Naive thymus-derived CD4-positive, alpha-beta T cell (primary cell): ENCODE measurements at regions of chr11 and their contacts with region 1.

Region 1: GRCh38 chr11:65859200-65859811 is 927 bp upstream of the MUS81 start:
- DNase-seq: peak; percentile 84 to 97 (median 90)
- ATAC-seq: peak; percentile 71
- H3K4me3 ChIP-seq: peak overlapping the region; percentile 65
- H3K4me3 Mint-ChIP-seq: peak overlapping the region; percentile 92 to 100 (median 97)
- H3K27ac ChIP-seq: peak overlapping the region; percentile 88
- H3K27ac Mint-ChIP-seq: peak overlapping the region; percentile 88 to 99 (median 97)
- H3K4me1 ChIP-seq: peaks cover 39 to 41% of the 10 kb centered on the region in 2 donors
- H3K4me1 Mint-ChIP-seq: peaks cover 35 to 63% (median 50%) of the 10 kb centered on the region in 7 donors
- H3K27me3 ChIP-seq: no peaks in the 10 kb centered on the region
- H3K27me3 Mint-ChIP-seq: no peaks in the 10 kb centered on the region

Region 2: DNA sequence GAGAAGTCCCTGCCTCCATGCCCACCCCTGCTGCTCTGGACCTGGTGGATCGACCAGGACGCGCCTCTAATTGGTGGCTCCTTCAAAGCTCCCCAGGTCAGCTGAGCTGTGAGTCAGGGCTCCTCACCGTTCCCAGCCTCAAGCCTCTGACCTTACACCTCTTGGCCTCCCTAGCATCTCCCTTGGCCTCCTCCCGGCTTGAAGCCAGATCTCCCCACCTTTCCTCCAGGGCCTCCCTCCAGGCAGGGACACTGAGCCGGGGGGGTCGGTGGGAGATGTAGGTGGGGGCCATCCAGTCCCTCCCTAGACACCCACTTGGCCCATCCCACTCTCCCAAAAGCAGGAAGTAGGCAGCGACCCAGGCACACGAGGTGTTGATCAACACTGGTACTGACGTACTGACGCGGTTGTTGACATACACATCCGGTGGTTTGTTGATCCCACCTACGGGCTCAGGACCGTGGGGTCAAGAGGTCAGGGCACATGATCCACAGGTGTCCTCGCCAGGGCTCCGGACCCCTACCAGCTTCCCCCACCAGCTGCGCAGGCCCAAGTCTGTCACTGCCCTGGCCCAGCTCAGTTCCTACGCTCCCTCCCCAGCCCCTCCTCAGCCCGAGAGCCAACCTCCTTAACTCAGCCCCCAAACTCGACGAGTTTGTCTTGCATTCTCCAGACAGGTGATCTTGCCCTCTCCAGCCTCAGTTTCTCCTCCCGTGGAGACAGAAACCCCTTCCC is 943.1 kb before region 1 on chr11:
- CTCF ChIA-PET with region 1: no interaction called
- POLR2A ChIA-PET with region 1: no interaction called
- intact Hi-C with region 1: no loop called
- DNase-seq: peak in 6 of 9 donors; percentile 11 to 54 (median 26)
- ATAC-seq: peak; percentile 15
- H3K4me3 ChIP-seq: peak overlapping the region; percentile 92
- H3K4me3 Mint-ChIP-seq: peak overlapping the region; percentile 88 to 98 (median 91)
- H3K27ac ChIP-seq: peak overlapping the region; percentile 83
- H3K27ac Mint-ChIP-seq: peak overlapping the region; percentile 81 to 99 (median 91)
- H3K4me1 ChIP-seq: peaks cover 18 to 22% of the 10 kb centered on the region in 2 donors
- H3K4me1 Mint-ChIP-seq: peaks cover 14 to 33% (median 25%) of the 10 kb centered on the region in 7 donors
- H3K27me3 ChIP-seq: no peaks in the 10 kb centered on the region
- H3K27me3 Mint-ChIP-seq: no peaks in the 10 kb centered on the region

Region 3: GRCh38 chr11:65416060-65416824 is 443.1 kb before region 1 on chr11:
- CTCF ChIA-PET with region 1: no interaction called
- POLR2A ChIA-PET with region 1: no interaction called
- intact Hi-C with region 1: no loop called
- DNase-seq: peak; percentile 82 to 94 (median 88)
- ATAC-seq: peak; percentile 72
- H3K4me3 ChIP-seq: peak overlapping the region; percentile 82
- H3K4me3 Mint-ChIP-seq: peak overlapping the region; percentile 92 to 100 (median 97)
- H3K27ac ChIP-seq: peak overlapping the region; percentile 98
- H3K27ac Mint-ChIP-seq: peak overlapping the region; percentile 98 to 100 (median 99)
- H3K4me1 ChIP-seq: peaks cover 36 to 46% of the 10 kb centered on the region in 2 donors
- H3K4me1 Mint-ChIP-seq: peaks cover 36 to 49% (median 44%) of the 10 kb centered on the region in 7 donors
- H3K27me3 ChIP-seq: no peaks in the 10 kb centered on the region
- H3K27me3 Mint-ChIP-seq: no peaks in the 10 kb centered on the region

Region 4: DNA sequence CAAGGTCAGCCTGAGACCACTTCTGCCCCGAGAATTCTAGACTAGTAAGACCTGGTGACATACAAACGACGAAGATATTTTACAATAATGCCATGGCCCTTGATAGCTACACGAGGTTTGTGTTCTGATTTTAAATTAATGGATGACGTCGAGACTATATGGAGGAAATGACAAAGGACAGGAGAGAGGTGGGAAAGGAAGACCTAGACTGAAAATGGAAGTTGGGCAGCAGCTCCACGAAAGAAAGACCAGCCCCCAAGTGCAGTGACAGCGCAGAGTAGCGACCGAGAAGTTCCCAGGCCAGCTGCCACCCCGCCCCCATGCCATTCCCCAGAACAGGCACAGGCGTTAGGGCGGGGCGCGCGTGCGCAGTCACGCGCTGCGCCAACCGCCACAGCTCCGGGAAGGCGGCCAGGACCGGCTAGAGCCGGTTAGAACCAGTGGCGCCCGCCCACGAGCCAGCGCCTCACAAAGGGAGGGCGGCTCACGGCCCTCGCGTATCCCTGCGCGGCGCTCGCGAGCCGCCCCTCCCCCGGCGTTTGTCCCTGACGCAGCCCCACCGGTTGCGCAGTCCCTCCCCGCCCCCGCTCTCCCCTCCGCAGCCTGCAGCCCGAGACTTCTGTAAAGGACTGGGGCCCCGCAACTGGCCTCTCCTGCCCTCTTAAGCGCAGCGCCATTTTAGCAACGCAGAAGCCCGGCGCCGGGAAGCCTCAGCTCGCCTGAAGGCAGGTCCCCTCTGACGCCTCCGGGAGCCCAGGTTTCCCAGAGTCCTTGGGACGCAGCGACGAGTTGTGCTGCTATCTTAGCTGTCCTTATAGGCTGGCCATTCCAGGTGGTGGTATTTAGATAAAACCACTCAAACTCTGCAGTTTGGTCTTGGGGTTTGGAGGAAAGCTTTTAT is 361.9 kb before region 1 on chr11:
- CTCF ChIA-PET with region 1: no interaction called
- POLR2A ChIA-PET with region 1: interaction called, 18 read pairs
- intact Hi-C with region 1: no loop called
- DNase-seq: peak; percentile 95 to 99 (median 98)
- ATAC-seq: peak; percentile 89
- H3K4me3 ChIP-seq: peak overlapping the region; percentile 99
- H3K4me3 Mint-ChIP-seq: no peak overlapping the region
- H3K27ac ChIP-seq: peak overlapping the region; percentile 99
- H3K27ac Mint-ChIP-seq: no peak overlapping the region
- H3K4me1 ChIP-seq: peaks cover 11 to 12% of the 10 kb centered on the region in 2 donors
- H3K4me1 Mint-ChIP-seq: peaks cover 13 to 43% (median 24%) of the 10 kb centered on the region in 7 donors
- H3K27me3 ChIP-seq: no peaks in the 10 kb centered on the region
- H3K27me3 Mint-ChIP-seq: peaks cover 0 to 6% (median 0%) of the 10 kb centered on the region in 5 donors

Region 5: GRCh38 chr11:65662799-65663638 is 196.3 kb before region 1 on chr11 and contains the start of gene RELA:
- CTCF ChIA-PET with region 1: no interaction called
- POLR2A ChIA-PET with region 1: interaction called, 10 read pairs
- intact Hi-C with region 1: loop called (anchors 2 kb)
- DNase-seq: peak; percentile 84 to 92 (median 89)
- ATAC-seq: peak; percentile 92
- H3K4me3 ChIP-seq: peak within 1 kb of the TSS; percentile 85
- H3K4me3 Mint-ChIP-seq: peak within 1 kb of the TSS; percentile 86 to 93 (median 90)
- H3K27ac ChIP-seq: peak within 1 kb of the TSS; percentile 99
- H3K27ac Mint-ChIP-seq: peak within 1 kb of the TSS; percentile 86 to 95 (median 92)
- H3K4me1 ChIP-seq: peaks cover 20 to 33% of the 10 kb centered on the region in 2 donors
- H3K4me1 Mint-ChIP-seq: peaks cover 10 to 43% (median 31%) of the 10 kb centered on the region in 7 donors
- H3K27me3 ChIP-seq: no peaks in the 10 kb centered on the region
- H3K27me3 Mint-ChIP-seq: no peaks in the 10 kb centered on the region
- total RNA-seq, gene RELA: 106 to 303 (median 165) TPM

Region 6: GRCh38 chr11:65833297-65834030 is 25.8 kb before region 1 on chr11 and contains the start of gene SNX32:
- CTCF ChIA-PET with region 1: interaction called, 3 read pairs
- POLR2A ChIA-PET with region 1: interaction called, 15 read pairs
- intact Hi-C with region 1: loop called (anchors 1 to 2 kb)
- DNase-seq: peak; percentile 88 to 94 (median 93)
- ATAC-seq: peak; percentile 100
- H3K4me3 ChIP-seq: peak within 1 kb of the TSS; percentile 91
- H3K4me3 Mint-ChIP-seq: no peak within 1 kb of the TSS
- H3K27ac ChIP-seq: peak within 1 kb of the TSS; percentile 78
- H3K27ac Mint-ChIP-seq: peak within 1 kb of the TSS in 1 of 9 donors; percentile 91
- H3K4me1 ChIP-seq: peaks cover 10 to 13% of the 10 kb centered on the region in 2 donors
- H3K4me1 Mint-ChIP-seq: peaks cover 7 to 17% (median 7%) of the 10 kb centered on the region in 7 donors
- H3K27me3 ChIP-seq: no peaks in the 10 kb centered on the region
- H3K27me3 Mint-ChIP-seq: peaks cover 0 to 21% (median 0%) of the 10 kb centered on the region in 5 donors
- total RNA-seq, gene SNX32: 0.81 to 2.0 (median 1.1) TPM

Region 7: DNA sequence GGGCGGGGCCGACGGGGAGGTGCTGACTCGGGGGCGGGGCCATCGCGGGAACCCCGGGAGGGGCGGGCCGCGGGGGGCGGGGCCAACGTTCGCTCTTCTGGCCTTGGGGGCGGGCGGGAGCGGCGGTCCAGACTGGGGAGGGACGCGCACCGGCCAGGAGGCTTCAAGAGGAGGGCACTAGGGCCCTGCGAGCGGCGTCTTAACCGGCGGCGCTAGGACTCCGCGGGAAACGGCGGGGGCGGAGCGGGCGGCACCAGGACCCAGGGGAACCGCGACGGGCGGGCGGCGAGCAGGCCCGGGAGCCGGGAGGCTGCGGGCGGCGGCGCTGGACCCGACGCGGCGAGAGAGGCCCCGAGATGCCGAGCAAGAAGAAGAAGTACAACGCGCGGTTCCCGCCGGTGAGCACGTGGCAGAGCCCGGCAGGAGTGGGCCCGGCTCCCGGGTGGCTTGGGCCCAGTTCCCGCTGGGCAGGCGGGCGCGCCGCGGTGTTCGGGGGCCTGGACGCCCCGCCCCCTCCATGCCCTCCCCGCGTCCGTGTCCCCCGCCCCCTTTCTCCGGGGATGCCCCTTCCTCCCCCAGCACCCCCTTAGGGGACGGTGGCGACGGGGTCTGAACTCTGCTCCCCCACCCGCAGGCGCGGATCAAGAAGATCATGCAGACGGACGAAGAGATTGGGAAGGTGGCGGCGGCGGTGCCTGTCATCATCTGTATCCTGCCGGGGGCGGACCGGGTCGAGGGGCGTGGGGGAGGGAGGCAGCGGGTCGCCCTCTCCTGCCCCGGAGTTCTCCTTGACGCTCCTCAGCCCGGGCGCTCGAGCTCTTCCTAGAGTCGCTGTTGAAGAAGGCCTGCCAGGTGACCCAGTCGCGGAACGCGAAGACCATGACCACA is 60.1 kb after region 1 on chr11 and contains the start of gene DRAP1:
- CTCF ChIA-PET with region 1: no interaction called
- POLR2A ChIA-PET with region 1: interaction called, 15 read pairs
- intact Hi-C with region 1: loop called (anchors 1 kb)
- DNase-seq: peak; percentile 95 to 98 (median 97)
- ATAC-seq: peak; percentile 93
- H3K4me3 ChIP-seq: peak within 1 kb of the TSS; percentile 83
- H3K4me3 Mint-ChIP-seq: peak within 1 kb of the TSS; percentile 86 to 96 (median 93)
- H3K27ac ChIP-seq: peak within 1 kb of the TSS; percentile 95
- H3K27ac Mint-ChIP-seq: peak within 1 kb of the TSS; percentile 79 to 96 (median 90)
- H3K4me1 ChIP-seq: peaks cover 26 to 28% of the 10 kb centered on the region in 2 donors
- H3K4me1 Mint-ChIP-seq: peaks cover 32 to 61% (median 36%) of the 10 kb centered on the region in 7 donors
- H3K27me3 ChIP-seq: no peaks in the 10 kb centered on the region
- H3K27me3 Mint-ChIP-seq: no peaks in the 10 kb centered on the region
- total RNA-seq, gene DRAP1: 72.6 to 166 (median 81.9) TPM

Region 8: GRCh38 chr11:66051766-66052663 is 192.7 kb after region 1 on chr11 and contains the start of gene SF3B2:
- CTCF ChIA-PET with region 1: interaction called, 3 read pairs
- POLR2A ChIA-PET with region 1: interaction called, 5 read pairs
- intact Hi-C with region 1: loop called (anchors 1 kb)
- DNase-seq: peak; percentile 81 to 94 (median 93)
- ATAC-seq: peak; percentile 99
- H3K4me3 ChIP-seq: peak within 1 kb of the TSS; percentile 88
- H3K4me3 Mint-ChIP-seq: peak within 1 kb of the TSS; percentile 95 to 100 (median 98)
- H3K27ac ChIP-seq: peak within 1 kb of the TSS; percentile 93
- H3K27ac Mint-ChIP-seq: peak within 1 kb of the TSS; percentile 95 to 99 (median 98)
- H3K4me1 ChIP-seq: peaks cover 14 to 18% of the 10 kb centered on the region in 2 donors
- H3K4me1 Mint-ChIP-seq: peaks cover 17 to 44% (median 38%) of the 10 kb centered on the region in 7 donors
- H3K27me3 ChIP-seq: no peaks in the 10 kb centered on the region
- H3K27me3 Mint-ChIP-seq: peaks cover 0 to 9% (median 0%) of the 10 kb centered on the region in 5 donors
- total RNA-seq, gene SF3B2: 163 to 248 (median 206) TPM

Region 9: DNA sequence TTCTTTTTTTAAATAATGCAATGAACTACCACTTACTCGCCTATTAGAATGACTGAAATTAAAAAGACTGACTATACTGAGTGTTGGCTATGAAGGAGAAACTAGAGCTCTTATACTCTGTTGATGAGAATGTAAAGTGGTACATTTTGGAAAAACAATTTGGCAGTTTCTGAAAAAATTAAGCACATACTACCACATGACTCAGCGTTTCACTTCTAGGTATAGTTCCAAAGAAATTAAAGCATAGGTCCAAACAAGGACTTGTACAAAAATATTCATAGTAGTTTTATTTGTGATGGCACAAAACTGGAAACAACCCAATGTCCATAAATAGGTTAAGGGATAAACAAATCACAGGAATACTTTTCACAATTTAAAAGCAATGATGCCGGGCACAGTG is 534.6 kb after region 1 on chr11:
- CTCF ChIA-PET with region 1: no interaction called
- POLR2A ChIA-PET with region 1: no interaction called
- intact Hi-C with region 1: no loop called
- DNase-seq: no peak
- ATAC-seq: no peak
- H3K4me3 ChIP-seq: no peak overlapping the region
- H3K4me3 Mint-ChIP-seq: no peak overlapping the region
- H3K27ac ChIP-seq: no peak overlapping the region
- H3K27ac Mint-ChIP-seq: no peak overlapping the region
- H3K4me1 ChIP-seq: no peaks in the 10 kb centered on the region
- H3K4me1 Mint-ChIP-seq: peaks cover 0 to 3% (median 0%) of the 10 kb centered on the region in 7 donors
- H3K27me3 ChIP-seq: no peaks in the 10 kb centered on the region
- H3K27me3 Mint-ChIP-seq: peaks cover 0 to 12% (median 6%) of the 10 kb centered on the region in 5 donors